Esophagus muscularis mucosa (tissue), 4 donors: ENCODE measurements at regions of chr18 and their contacts with region 1.

Region 1: DNA sequence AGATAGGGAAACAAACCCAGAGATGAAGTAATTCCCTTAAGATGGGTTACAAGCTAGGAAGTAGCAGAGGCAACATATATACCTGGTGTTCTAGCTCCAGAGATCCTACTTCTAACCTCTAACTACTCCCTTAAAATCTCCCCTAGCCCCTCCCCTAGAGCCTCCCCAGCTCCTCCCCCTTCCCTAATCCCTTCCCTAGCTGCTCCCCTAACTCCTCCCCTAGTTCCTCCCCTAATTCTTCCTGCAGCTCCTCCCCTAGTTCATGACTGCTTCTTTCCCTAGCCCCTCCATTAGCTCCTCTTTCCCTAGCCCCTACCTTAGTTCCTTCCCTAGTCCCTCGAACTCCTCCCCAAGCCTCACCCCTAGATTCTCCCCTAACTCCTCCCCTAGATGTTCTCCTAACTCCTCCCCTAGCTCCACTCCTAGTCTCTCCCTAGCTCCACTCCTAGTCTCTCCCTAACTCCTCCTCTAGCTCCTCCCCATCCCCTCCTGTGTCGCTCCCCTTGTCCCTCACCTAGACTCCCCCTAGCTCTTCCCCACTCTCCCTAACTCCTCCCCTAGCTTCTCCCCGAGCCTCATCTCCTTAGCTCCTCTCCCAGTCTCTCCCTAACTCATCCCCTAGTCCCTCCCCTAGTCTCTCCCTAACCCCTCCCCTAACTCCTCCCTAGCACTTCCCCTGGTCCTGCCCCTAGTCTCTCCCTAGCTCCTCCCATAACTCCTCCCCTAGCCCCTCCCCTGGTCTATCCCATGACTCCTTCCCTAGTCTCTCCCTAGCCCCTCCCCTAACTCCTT is 108.9 kb downstream of the CD226 start:
- DNase-seq: no peak
- H3K4me3 ChIP-seq: no peak overlapping the region
- H3K27ac ChIP-seq: no peak overlapping the region
- H3K4me1 ChIP-seq: no peaks in the 10 kb centered on the region
- H3K27me3 ChIP-seq: no peaks in the 10 kb centered on the region
- CTCF ChIP-seq: no peak
- EP300 ChIP-seq: no peak
- POLR2A ChIP-seq: no peak

Region 2: GRCh38 chr18:69282371-69282770 is 556.4 kb before region 1 on chr18:
- intact Hi-C with region 1: no loop called
- DNase-seq: no peak
- H3K4me3 ChIP-seq: no peak overlapping the region
- H3K27ac ChIP-seq: no peak overlapping the region
- H3K4me1 ChIP-seq: no peaks in the 10 kb centered on the region
- H3K27me3 ChIP-seq: no peaks in the 10 kb centered on the region
- CTCF ChIP-seq: no peak
- EP300 ChIP-seq: no peak
- POLR2A ChIP-seq: no peak

Region 3: DNA sequence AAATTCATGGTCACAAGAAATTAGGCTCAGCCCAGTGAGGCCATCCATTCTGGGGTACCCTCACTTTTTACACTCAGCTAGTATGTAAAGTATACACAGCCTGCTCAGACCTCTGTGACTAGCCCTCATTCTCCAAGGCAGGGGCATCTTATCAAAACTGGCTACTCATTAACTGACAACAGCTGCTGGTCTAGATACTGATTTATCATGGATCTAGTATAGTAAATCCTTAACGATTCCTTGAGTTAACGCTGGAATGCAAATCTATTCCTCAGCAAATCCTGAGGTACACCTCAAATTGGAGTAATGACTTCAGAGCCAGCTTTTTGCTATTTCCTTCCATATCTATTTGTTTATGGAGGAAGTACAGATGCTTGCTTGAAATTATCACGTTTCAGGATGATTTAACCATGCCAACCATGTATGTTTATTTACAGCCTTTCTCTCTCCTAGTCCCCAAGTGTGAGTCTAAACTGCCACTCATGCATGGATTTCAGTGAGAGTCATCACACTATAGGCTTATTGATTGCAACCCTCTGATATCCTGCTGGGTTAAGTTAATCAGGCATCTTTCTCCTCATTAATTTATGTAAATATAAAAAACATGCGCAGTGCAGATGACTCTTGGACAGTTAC is 508.3 kb before region 1 on chr18:
- intact Hi-C with region 1: no loop called
- DNase-seq: no peak
- H3K4me3 ChIP-seq: no peak overlapping the region
- H3K27ac ChIP-seq: no peak overlapping the region
- H3K4me1 ChIP-seq: no peaks in the 10 kb centered on the region
- H3K27me3 ChIP-seq: no peaks in the 10 kb centered on the region
- CTCF ChIP-seq: no peak
- EP300 ChIP-seq: no peak
- POLR2A ChIP-seq: no peak

Region 4: GRCh38 chr18:69664399-69664798 is 174.4 kb before region 1 on chr18:
- intact Hi-C with region 1: no loop called
- DNase-seq: no peak
- H3K4me3 ChIP-seq: no peak overlapping the region
- H3K27ac ChIP-seq: no peak overlapping the region
- H3K4me1 ChIP-seq: no peaks in the 10 kb centered on the region
- H3K27me3 ChIP-seq: no peaks in the 10 kb centered on the region
- CTCF ChIP-seq: no peak
- EP300 ChIP-seq: no peak
- POLR2A ChIP-seq: no peak

Region 5: DNA sequence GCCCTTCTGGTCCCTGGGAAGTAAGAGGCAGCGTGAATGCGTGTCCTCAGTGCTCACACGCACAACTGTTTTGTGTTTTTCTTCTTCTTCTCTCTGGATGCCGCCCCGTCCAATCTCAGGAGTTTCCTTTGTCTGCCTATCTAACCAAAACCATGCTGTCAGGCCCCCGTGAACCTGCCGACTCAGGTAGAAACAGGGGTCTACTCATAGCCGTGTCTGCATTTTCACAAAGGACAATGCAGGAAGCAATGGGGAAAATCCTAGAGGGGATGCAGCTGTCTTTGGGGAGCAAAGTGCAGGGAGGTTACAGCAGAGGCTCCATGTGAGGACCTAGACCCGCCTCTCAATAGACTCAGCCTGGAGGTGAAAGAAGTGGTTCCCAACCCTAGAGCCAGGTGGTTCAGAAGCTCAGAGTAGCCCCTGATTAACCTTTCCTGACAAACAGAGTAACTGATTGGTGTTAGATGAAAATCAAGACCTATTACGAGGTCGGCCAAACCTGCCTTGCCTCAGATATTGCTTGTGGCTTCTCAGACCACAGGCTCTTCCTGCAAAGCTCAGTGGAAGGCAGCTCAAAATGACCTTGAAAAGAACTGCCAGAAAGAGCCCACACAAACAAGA is 59.5 kb after region 1 on chr18:
- intact Hi-C with region 1: loop called (anchors 5 kb)
- DNase-seq: no peak
- H3K4me3 ChIP-seq: no peak overlapping the region
- H3K27ac ChIP-seq: no peak overlapping the region
- H3K4me1 ChIP-seq: no peaks in the 10 kb centered on the region
- H3K27me3 ChIP-seq: no peaks in the 10 kb centered on the region
- CTCF ChIP-seq: no peak
- EP300 ChIP-seq: no peak
- POLR2A ChIP-seq: no peak